ENCODE measurements at regions of chr2 and their contacts with region 1.

Region 1: DNA sequence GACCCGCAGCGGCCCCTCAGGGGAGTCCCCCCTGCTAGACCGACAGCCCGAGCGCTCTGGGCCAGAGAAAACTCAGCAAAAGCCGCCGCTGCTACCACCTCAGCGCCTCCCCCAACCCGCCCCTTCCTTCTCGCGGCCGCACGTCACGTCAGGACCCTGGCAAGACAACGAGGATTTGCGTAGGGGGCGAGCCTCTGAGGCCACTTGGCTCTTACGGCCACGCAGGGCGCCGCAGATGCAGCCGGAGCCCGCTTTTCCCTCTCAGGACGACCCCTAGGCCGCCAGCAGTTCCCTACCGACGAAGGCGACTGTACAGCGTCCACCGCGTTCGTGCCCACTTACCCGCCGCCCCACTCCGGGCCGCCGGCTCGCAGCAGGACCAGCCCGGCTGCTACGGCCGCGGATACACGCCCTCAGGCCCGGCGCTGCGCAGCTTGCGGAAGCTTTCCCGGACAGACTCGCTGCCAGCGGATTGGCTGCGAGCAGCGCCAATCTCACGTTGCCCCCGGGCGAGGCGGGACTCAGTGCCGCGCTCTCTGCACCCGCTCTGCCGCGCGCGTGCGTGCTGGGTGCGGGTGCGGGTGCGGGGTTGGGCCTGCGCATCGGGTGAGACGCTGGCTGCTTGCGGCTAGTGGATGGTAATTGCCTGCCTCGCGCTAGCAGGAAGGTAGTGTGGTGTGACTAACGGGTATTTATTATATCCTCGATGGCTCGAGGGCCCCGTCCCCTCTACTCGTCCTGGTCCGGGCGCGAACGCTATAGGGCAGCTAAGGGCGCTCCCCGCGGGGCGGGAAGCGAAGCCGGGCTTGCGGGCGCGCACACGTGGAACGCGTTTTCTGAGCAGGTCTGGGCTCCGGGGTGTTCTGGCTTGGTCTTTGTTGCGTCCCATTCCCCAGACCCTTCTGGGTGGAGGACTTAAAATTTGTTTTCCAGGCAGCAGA is at the starts of genes ORMDL1 and PMS1:
- DNase-seq: peak; percentile 99
- H3K4me3 Mint-ChIP-seq: peak within 1 kb of the TSS; percentile 86
- H3K27ac Mint-ChIP-seq: peak within 1 kb of the TSS; percentile 86
- H3K4me1 Mint-ChIP-seq: peaks cover 37% of the 10 kb centered on the region
- H3K27me3 Mint-ChIP-seq: no peaks in the 10 kb centered on the region
- total RNA-seq, gene ORMDL1: 74.5 and 82.7 TPM in 2 replicates
- total RNA-seq, gene PMS1: 67.2 and 69.2 TPM in 2 replicates

Region 2: DNA sequence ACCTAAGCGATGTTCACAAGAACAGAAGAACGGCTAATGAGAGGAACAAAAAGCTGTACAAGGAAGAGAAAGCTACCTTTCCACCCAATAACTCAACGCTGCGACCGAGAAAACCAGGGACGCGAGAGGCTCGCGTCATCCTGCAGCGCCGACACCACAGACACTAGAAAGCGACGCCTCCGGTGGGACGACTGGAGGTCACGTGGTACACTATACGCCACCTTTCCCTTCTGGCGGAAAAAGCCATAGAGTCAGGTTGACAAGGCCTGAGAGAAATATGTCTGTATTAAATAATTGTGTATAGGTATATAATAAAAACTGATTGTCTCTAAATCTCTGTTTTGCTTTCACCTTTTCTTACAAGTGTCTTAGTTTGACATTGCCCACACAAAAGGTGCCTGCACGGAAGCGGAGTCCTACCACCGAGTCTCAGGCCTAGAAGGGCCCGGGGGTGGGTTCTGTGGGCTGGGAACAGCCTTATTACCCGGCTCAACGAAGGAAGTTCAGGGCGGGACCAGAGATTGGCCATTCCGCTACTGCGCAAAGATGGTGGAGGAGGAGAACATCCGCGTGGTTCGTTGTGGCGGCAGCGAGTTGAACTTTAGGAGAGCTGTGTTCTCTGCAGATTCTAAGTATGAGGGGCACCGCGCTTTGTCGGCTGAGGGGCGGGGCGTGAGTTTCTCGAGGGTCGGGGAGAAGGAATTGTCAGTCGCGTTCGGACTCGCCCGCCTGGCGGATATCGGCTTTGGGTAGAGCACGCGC is 343.1 kb before region 1 on chr2 and contains the start of gene WDR75:
- intact Hi-C with region 1: loop called (anchors 1 kb)
- DNase-seq: peak; percentile 98
- H3K4me3 Mint-ChIP-seq: no peak within 1 kb of the TSS
- H3K27ac Mint-ChIP-seq: peak within 1 kb of the TSS; percentile 99
- H3K4me1 Mint-ChIP-seq: peaks cover 13% of the 10 kb centered on the region
- H3K27me3 Mint-ChIP-seq: peaks cover 7% of the 10 kb centered on the region
- total RNA-seq, gene WDR75: 117 and 121 TPM in 2 replicates

Region 3: DNA sequence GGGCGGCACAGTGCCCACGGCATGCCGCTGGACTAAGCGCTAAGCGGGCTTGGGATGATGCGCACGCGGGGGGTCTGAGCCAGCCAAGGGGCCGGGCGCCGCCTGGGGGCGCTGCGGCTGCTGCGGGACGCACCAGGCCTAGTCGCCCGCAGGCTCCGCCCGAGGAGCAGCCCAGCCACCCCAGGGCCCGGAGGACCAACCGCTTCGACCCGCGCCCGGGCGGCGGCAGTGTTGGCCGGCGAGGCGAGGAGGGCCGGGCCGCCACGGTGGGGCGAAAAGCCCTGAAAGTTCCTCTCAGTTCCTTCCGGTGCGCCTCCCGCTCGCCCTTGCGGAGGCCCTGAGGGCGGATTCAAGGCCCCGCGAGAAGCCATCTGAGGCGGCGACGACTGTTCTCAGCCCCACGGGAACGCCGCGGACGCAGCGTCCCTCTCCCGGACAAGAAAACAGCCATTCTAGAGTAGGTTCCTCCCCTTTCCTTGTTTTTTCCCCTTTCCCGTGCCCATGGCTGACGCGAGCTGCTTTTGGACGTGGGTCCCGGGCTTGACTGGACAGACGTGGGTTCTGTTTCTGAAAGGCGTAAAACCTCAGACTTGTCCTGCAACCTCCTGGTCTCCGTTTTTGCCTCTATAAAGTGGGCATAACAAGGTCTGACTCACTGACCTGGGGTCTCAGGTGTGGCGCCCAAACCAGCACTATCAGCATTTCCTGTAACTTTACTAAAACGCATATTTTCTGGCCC is 109.7 kb before region 1 on chr2 and contains the start of gene ANKAR:
- intact Hi-C with region 1: loop called (anchors 1 kb)
- DNase-seq: peak; percentile 94
- H3K4me3 Mint-ChIP-seq: peak within 1 kb of the TSS; percentile 86
- H3K27ac Mint-ChIP-seq: peak within 1 kb of the TSS; percentile 94
- H3K4me1 Mint-ChIP-seq: peaks cover 25% of the 10 kb centered on the region
- H3K27me3 Mint-ChIP-seq: no peaks in the 10 kb centered on the region
- total RNA-seq, gene ANKAR: 2.9 and 3.4 TPM in 2 replicates

Region 4: GRCh38 chr2:189819297-189819704 is 35.1 kb after region 1 on chr2:
- intact Hi-C with region 1: loop called (anchors 2 kb)
- DNase-seq: no peak
- H3K4me3 Mint-ChIP-seq: peak overlapping the region; percentile 11
- H3K27ac Mint-ChIP-seq: peak overlapping the region; percentile 82
- H3K4me1 Mint-ChIP-seq: peaks cover 13% of the 10 kb centered on the region
- H3K27me3 Mint-ChIP-seq: no peaks in the 10 kb centered on the region

Region 5: DNA sequence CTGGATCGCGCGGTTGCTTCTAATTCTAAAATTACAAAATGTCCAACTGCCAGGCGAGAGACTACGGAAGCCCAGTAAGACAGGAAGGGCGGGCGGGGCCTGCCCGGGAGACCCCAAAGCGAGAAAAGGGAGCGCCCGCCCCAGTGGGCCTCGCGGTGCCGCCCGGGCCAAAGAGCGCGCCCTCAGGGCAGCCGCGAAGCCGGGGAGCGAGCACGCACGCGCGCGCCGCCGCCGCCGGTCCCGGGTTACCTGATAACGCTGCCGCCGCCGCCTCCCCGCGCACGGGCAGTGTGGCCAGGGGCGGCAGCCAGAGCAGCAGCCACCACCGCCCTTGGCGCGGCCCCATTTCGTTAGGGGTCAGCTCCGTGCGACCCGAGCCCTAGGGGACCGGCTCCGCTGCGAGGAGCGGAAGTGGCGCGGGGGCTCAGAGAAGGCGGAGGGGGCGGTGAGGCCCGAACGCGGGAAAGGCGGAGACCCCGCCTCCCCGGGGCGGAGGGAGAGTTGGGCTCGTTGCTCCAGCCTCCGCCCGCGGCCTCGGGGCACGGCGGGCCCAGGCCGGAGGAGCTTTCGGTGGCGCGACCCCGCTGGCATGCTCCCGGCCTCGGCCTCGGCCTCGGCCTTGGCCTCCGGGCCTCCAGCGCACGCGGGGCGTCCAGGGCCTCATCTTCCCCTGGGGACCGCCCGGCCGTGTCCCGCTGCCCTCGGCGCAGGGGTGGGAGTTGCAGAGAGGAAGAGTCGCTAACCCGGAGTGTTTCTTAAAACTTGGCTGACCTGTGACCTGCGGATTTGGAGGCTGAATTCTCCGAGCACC is 750.3 kb after region 1 on chr2 and contains the start of gene NEMP2:
- intact Hi-C with region 1: loop called (anchors 10 kb)
- DNase-seq: peak; percentile 95
- H3K4me3 Mint-ChIP-seq: peak within 1 kb of the TSS; percentile 93
- H3K27ac Mint-ChIP-seq: peak within 1 kb of the TSS; percentile 99
- H3K4me1 Mint-ChIP-seq: peaks cover 41% of the 10 kb centered on the region
- H3K27me3 Mint-ChIP-seq: no peaks in the 10 kb centered on the region
- total RNA-seq, gene NEMP2: 16.4 and 19.0 TPM in 2 replicates

Measured in activated CD4-positive, alpha-beta T cell treated with anti-CD3 and anti-CD28 coated beads, Interleukin-2, amount 10 ng/mL, durations not matched to agents 24 days and 14 days (primary cell).